ENCODE measurements at regions of chr3 and their contacts with region 1.

Region 1: GRCh38 chr3:15064835-15065549 is at the start of gene MRPS25:
- DNase-seq: peak; percentile 80 to 90 (median 87)
- ATAC-seq: peak; percentile 99
- H3K4me3 ChIP-seq: peak within 1 kb of the TSS; percentile 86
- H3K4me3 Mint-ChIP-seq: peak within 1 kb of the TSS; percentile 94 to 98 (median 96)
- H3K27ac ChIP-seq: peak within 1 kb of the TSS; percentile 87
- H3K27ac Mint-ChIP-seq: peak within 1 kb of the TSS; percentile 87 to 99 (median 94)
- H3K4me1 ChIP-seq: peaks cover 7 to 14% of the 10 kb centered on the region in 2 donors
- H3K4me1 Mint-ChIP-seq: peaks cover 16 to 29% (median 22%) of the 10 kb centered on the region in 7 donors
- H3K27me3 ChIP-seq: no peaks in the 10 kb centered on the region
- H3K27me3 Mint-ChIP-seq: no peaks in the 10 kb centered on the region
- total RNA-seq, gene MRPS25: 57.6 to 104 (median 76.0) TPM

Region 2: DNA sequence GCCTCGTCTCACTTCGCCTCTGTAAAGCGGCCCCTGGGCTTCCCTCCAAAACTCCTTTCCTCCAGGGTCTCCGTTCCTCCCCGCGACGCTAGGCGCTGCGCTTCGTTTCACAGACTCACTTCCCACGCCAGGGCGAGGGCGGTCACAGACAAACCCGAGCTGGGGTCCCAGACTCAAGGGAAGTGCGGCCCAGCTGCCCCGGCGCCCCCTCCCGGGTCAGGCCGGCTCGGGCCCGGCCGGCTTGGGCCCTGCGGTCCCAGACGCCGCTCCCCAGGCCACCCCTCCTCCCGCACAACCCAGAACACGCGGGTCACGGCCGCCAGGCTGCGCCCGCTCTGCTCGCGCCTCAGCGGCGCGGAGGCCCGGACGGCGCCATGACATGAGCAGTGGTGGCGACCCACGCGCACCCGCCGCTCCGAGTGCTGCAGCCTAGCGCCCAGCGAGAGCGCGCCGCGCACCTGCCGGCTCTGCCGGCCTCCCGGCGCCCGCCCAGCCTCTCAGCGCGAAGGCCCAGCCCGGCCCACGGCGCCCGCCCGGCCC is 1645.4 kb before region 1 on chr3:
- CTCF ChIA-PET with region 1: no interaction called
- POLR2A ChIA-PET with region 1: no interaction called
- intact Hi-C with region 1: loop called in 1 of 2 experiments (anchors 10 kb)
- DNase-seq: peak; percentile 58 to 69 (median 64)
- ATAC-seq: peak; percentile 74
- H3K4me3 ChIP-seq: peak overlapping the region; percentile 70
- H3K4me3 Mint-ChIP-seq: peak overlapping the region; percentile 77 to 100 (median 90)
- H3K27ac ChIP-seq: peak overlapping the region; percentile 96
- H3K27ac Mint-ChIP-seq: peak overlapping the region; percentile 83 to 97 (median 92)
- H3K4me1 ChIP-seq: peaks cover 55 to 60% of the 10 kb centered on the region in 2 donors
- H3K4me1 Mint-ChIP-seq: peaks cover 41 to 81% (median 69%) of the 10 kb centered on the region in 7 donors
- H3K27me3 ChIP-seq: no peaks in the 10 kb centered on the region
- H3K27me3 Mint-ChIP-seq: no peaks in the 10 kb centered on the region

Region 3: DNA sequence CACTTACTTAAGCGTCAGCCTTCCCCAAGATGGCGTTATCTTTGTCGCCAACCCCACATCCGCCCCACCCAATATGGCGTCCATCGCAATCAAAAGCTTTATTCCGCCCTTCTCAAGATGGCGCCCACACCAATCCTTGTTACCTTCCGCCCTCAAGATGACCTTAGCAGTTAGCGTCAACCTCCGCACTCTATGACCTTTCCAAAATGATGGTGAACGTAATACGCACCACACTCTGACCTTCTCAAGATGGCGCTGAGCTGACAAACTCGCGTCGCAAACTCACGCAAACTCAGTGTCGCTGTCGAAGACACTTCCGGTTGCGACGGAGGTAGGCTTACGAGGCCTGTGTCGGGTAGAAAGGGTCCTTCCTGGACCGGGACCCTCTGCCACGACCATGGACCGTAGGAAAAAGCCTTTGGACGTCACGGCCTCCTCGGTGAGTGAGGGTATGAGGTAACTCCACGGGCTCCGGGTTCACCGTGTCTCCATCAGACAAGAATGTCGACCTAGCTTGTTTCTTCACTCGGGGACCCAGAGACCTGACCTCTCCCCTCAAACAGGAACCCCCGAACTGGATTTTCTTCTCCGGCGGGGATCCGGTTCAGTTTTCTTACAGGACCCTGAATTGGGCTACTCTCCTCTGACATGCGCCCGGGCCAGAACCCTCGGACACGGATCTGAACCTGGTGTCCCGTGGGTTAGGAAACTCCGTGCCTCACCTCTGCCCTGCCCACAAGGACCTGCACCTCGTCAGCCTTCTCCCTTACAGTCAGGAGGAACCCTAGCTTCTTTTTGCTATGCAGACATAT is 413.3 kb before region 1 on chr3 and contains the start of gene CCDC174:
- CTCF ChIA-PET with region 1: no interaction called
- POLR2A ChIA-PET with region 1: interaction called, 6 read pairs
- intact Hi-C with region 1: loop called (anchors 1 kb)
- DNase-seq: peak; percentile 84 to 98 (median 96)
- ATAC-seq: peak; percentile 99
- H3K4me3 ChIP-seq: peak within 1 kb of the TSS; percentile 90
- H3K4me3 Mint-ChIP-seq: peak within 1 kb of the TSS; percentile 84 to 100 (median 96)
- H3K27ac ChIP-seq: peak within 1 kb of the TSS; percentile 94
- H3K27ac Mint-ChIP-seq: peak within 1 kb of the TSS; percentile 92 to 100 (median 98)
- H3K4me1 ChIP-seq: peaks cover 21 to 25% of the 10 kb centered on the region in 2 donors
- H3K4me1 Mint-ChIP-seq: peaks cover 25 to 80% (median 66%) of the 10 kb centered on the region in 7 donors
- H3K27me3 ChIP-seq: no peaks in the 10 kb centered on the region
- H3K27me3 Mint-ChIP-seq: peaks cover 0 to 2% (median 0%) of the 10 kb centered on the region in 5 donors
- total RNA-seq, gene CCDC174: 21.6 to 59.2 (median 46.2) TPM

Region 4: GRCh38 chr3:15040844-15041243 is 24.1 kb before region 1 on chr3:
- CTCF ChIA-PET with region 1: no interaction called
- POLR2A ChIA-PET with region 1: no interaction called
- intact Hi-C with region 1: no loop called
- DNase-seq: no peak
- ATAC-seq: no peak
- H3K4me3 ChIP-seq: no peak overlapping the region
- H3K4me3 Mint-ChIP-seq: no peak overlapping the region
- H3K27ac ChIP-seq: peak overlapping the region; percentile 6
- H3K27ac Mint-ChIP-seq: peak overlapping the region in 4 of 9 donors; percentile 8 to 87 (median 30)
- H3K4me1 ChIP-seq: peaks cover 0 to 6% of the 10 kb centered on the region in 2 donors
- H3K4me1 Mint-ChIP-seq: peaks cover 12 to 32% (median 20%) of the 10 kb centered on the region in 7 donors
- H3K27me3 ChIP-seq: no peaks in the 10 kb centered on the region
- H3K27me3 Mint-ChIP-seq: no peaks in the 10 kb centered on the region

Region 5: DNA sequence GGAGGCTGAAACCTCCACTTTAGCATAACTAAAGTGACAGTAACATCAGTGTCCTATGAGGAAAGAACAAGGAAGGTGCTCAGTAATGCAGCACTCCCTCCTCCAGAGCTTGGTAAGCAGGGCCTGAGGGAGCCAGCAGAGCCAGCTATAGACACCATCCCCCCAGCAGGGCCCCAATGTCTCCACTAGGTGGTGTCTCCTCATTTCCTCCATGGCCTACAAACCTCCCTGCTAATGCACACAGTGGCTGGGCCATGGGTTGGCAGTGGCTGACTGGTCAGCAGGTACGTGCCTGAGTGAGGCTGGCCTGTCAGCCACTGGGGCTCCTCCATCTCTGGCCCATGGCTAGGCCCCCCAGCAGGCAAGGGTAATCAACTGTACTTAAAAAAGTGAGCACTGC is 13.5 kb before region 1 on chr3:
- CTCF ChIA-PET with region 1: interaction called, 14 read pairs
- POLR2A ChIA-PET with region 1: interaction called, 9 read pairs
- intact Hi-C with region 1: loop called (anchors 1 to 2 kb)
- DNase-seq: peak in 6 of 9 donors; percentile 13 to 40 (median 27)
- ATAC-seq: peak; percentile 81
- H3K4me3 ChIP-seq: no peak overlapping the region
- H3K4me3 Mint-ChIP-seq: no peak overlapping the region
- H3K27ac ChIP-seq: no peak overlapping the region
- H3K27ac Mint-ChIP-seq: peak overlapping the region in 6 of 9 donors; percentile 32 to 87 (median 68)
- H3K4me1 ChIP-seq: peaks cover 0 to 12% of the 10 kb centered on the region in 2 donors
- H3K4me1 Mint-ChIP-seq: peaks cover 15 to 40% (median 25%) of the 10 kb centered on the region in 7 donors
- H3K27me3 ChIP-seq: no peaks in the 10 kb centered on the region
- H3K27me3 Mint-ChIP-seq: no peaks in the 10 kb centered on the region

Region 6: DNA sequence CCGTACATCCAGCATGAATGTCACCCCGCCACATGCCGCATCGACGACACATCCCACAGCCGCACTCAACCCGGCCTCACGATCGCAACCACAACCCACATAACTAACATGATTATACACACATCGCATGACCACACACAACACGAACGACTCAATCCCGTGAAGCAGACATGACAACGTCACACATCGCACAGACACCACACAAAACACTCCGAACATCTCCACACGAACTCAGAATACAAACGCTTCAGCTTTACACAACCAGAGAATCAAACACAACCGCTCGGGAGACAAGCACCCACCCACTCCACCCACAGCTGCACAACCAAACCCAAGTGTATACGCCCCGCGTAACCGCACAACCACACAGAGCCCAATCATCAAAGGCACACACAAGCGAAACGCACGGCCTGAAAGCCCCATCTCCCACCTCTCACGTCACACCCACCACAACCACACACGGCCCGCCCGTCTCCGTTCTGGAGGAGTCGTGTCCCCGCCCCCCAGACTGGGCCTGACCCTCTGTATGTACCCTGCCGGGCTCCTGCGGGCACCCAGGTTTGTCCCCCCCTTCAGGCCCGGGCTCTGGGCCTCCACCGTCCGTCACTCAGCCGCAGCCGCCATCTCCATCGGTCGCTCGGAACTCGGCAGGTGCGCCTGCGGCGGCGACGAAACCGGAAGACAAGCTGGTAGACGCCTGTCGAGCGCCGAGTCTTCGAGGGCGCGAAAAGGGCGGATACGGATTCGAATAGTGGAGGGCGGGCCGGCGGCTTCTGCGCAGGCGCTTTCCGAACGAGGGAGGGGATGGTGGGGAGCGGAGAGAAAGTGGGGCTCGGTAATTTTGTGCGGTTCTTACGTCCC is 33.7 kb after region 1 on chr3 and contains the start of gene RBSN:
- CTCF ChIA-PET with region 1: no interaction called
- POLR2A ChIA-PET with region 1: interaction called, 23 read pairs
- intact Hi-C with region 1: loop called (anchors 1 kb)
- DNase-seq: peak; percentile 87 to 96 (median 94)
- ATAC-seq: peak; percentile 87
- H3K4me3 ChIP-seq: peak within 1 kb of the TSS; percentile 83
- H3K4me3 Mint-ChIP-seq: peak within 1 kb of the TSS; percentile 90 to 99 (median 96)
- H3K27ac ChIP-seq: peak within 1 kb of the TSS; percentile 96
- H3K27ac Mint-ChIP-seq: peak within 1 kb of the TSS; percentile 90 to 99 (median 98)
- H3K4me1 ChIP-seq: peaks cover 8 to 14% of the 10 kb centered on the region in 2 donors
- H3K4me1 Mint-ChIP-seq: peaks cover 21 to 42% (median 30%) of the 10 kb centered on the region in 7 donors
- H3K27me3 ChIP-seq: no peaks in the 10 kb centered on the region
- H3K27me3 Mint-ChIP-seq: peaks cover 0 to 9% (median 2%) of the 10 kb centered on the region in 5 donors
- total RNA-seq, gene RBSN: 20.5 to 54.4 (median 39.6) TPM

Measured in naive thymus-derived CD4-positive, alpha-beta T cell (primary cell).